ENCODE measurements at regions of chr7 and their contacts with region 1.

Region 1: DNA sequence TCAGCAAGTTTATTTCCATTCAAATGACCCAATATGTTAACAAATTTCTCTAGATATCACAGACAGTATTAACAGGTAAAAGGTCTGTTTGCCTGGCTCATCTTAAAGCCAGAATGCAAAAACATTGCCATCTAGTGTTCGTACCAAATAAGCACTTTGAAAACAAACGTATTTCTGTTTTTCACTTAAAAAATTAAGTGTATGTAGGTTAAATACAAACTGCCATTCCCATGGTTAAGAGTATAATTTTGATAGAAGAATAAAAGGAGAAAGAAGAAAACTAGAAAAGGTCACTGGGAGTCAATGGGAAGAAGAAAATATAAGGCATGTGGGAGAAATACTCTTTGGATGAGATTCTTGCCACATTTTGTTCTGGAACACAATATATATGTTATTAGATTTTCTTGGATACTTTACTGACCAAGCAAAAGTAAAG is 51.0 kb downstream of the ORC5 start:
- DNase-seq: no peak
- H3K4me3 Mint-ChIP-seq: no peak overlapping the region
- H3K27ac Mint-ChIP-seq: no peak overlapping the region
- H3K4me1 Mint-ChIP-seq: no peaks in the 10 kb centered on the region
- H3K27me3 Mint-ChIP-seq: no peaks in the 10 kb centered on the region

Region 2: GRCh38 chr7:103573479-103574058 is 583.3 kb before region 1 on chr7:
- intact Hi-C with region 1: loop called (anchors 2 kb)
- DNase-seq: no peak
- H3K4me3 Mint-ChIP-seq: no peak overlapping the region
- H3K27ac Mint-ChIP-seq: no peak overlapping the region
- H3K4me1 Mint-ChIP-seq: no peaks in the 10 kb centered on the region
- H3K27me3 Mint-ChIP-seq: peaks cover 8% of the 10 kb centered on the region

Region 3: GRCh38 chr7:103989785-103990767 is 166.8 kb before region 1 on chr7:
- intact Hi-C with region 1: loop called (anchors 10 kb)
- DNase-seq: no peak
- H3K4me3 Mint-ChIP-seq: peak overlapping the region; percentile 59
- H3K27ac Mint-ChIP-seq: no peak overlapping the region
- H3K4me1 Mint-ChIP-seq: peaks cover 6% of the 10 kb centered on the region
- H3K27me3 Mint-ChIP-seq: peaks cover 58% of the 10 kb centered on the region

Region 4: DNA sequence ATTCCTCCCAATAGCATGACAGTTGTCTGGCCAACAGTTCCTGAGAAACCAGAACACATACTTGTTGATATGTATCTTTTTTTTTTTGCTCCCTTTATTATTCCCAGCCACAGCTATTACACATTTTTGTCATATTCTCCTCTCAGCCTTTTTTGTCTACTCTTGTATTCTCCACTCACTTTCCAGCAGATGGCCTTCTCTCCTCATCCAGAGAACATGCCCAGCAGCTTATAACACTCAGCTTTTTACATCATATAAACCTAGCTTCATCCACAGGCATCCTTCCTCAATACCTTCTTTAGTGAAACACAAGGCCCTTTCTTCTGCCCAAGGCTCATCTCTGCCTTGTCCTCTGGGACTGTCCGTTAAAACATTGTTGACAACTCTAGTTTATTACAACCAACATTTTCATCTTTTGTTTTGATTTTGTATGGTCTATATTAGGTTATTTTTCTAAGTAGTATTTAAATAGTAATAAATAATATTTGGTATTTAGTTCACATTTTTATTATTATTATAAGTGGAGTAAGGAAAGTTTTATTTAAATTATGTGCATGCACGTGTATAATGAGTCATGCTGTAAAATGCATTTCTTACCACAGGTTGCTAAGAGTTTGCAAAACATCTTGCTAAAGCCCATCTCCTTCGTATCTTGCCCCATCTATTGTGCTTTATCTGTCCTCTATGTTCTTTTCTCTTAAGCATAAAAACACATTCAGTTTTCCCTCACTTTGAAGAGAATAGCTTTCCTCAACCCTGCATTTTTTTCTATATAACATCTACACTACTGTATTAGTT is 50.6 kb before region 1 on chr7:
- intact Hi-C with region 1: loop called (anchors 2 kb)
- DNase-seq: no peak
- H3K4me3 Mint-ChIP-seq: no peak overlapping the region
- H3K27ac Mint-ChIP-seq: no peak overlapping the region
- H3K4me1 Mint-ChIP-seq: no peaks in the 10 kb centered on the region
- H3K27me3 Mint-ChIP-seq: no peaks in the 10 kb centered on the region

Measured in activated T-helper 2 cell treated with anti-CD3 and anti-CD28 coated beads, Interferon-gamma antibody, Interleukin-2, Interleukin-4, amounts not matched to agents 10 μg/mL and 5 μg/mL and 100 μg/mL, durations not matched to agents 14 hours and 24 hours and 36 hours (primary cell).